ENCODE measurements at regions of chr19 and their contacts with region 1.

Region 1: GRCh38 chr19:21568816-21569493 is 63.6 kb downstream of the ZNF429 start:
- DNase-seq: peak; percentile 54 to 94 (median 89)
- ATAC-seq: peak; percentile 99
- H3K4me3 ChIP-seq: peak overlapping the region; percentile 64
- H3K4me3 Mint-ChIP-seq: peak overlapping the region; percentile 85 to 99 (median 94)
- H3K27ac ChIP-seq: peak overlapping the region; percentile 71
- H3K27ac Mint-ChIP-seq: peak overlapping the region; percentile 94 to 99 (median 96)
- H3K4me1 ChIP-seq: no peaks in the 10 kb centered on the region
- H3K4me1 Mint-ChIP-seq: peaks cover 0 to 44% (median 24%) of the 10 kb centered on the region in 7 donors
- H3K27me3 ChIP-seq: no peaks in the 10 kb centered on the region
- H3K27me3 Mint-ChIP-seq: no peaks in the 10 kb centered on the region

Region 2: DNA sequence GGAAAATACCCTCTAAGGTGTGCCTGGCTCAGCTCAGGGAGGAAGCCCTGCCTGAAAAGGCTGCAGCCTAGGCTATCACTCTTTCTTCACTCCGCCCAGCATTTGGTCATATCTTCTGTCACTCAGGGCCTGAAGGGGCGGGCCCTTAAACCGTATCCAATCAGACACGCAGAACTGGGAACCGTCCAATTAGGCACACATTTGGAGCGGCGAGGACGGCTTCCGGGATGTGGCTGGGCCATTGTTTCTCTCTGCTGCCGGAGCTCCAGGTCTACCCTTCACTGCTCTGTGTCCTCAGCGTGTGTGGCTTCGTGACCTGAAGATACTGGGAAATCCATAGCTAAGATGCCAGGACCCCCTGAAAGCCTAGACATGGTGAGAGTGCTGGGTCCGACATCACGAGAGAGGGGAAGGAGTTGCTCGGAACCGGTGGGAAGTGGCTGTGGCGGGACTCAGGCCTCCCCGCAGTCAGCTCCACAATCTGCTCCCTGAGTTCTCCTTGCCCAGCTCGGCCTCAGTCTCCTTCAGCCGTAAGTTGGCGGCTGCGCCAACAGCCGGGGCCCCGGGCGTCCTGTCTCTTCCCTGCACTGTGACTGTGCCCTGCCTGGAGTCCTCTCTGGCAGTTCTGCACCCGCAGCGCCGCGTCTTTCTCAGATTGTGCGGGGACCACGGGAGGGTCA is 171.9 kb before region 1 on chr19 and contains the start of gene ZNF493:
- CTCF ChIA-PET with region 1: no interaction called
- POLR2A ChIA-PET with region 1: interaction called, 5 read pairs
- intact Hi-C with region 1: loop called in 1 of 2 experiments (anchors 2 kb)
- DNase-seq: peak; percentile 76 to 95 (median 91)
- ATAC-seq: peak; percentile 100
- H3K4me3 ChIP-seq: peak within 1 kb of the TSS; percentile 80
- H3K4me3 Mint-ChIP-seq: peak within 1 kb of the TSS; percentile 90 to 99 (median 97)
- H3K27ac ChIP-seq: peak within 1 kb of the TSS; percentile 77
- H3K27ac Mint-ChIP-seq: peak within 1 kb of the TSS; percentile 68 to 97 (median 92)
- H3K4me1 ChIP-seq: peaks cover 6 to 11% of the 10 kb centered on the region in 2 donors
- H3K4me1 Mint-ChIP-seq: peaks cover 19 to 48% (median 32%) of the 10 kb centered on the region in 7 donors
- H3K27me3 ChIP-seq: no peaks in the 10 kb centered on the region
- H3K27me3 Mint-ChIP-seq: peaks cover 0 to 4% (median 0%) of the 10 kb centered on the region in 5 donors
- total RNA-seq, gene ZNF493: 19.7 to 78.3 (median 34.6) TPM

Region 3: GRCh38 chr19:21423057-21424041 is 145.6 kb before region 1 on chr19:
- CTCF ChIA-PET with region 1: no interaction called
- POLR2A ChIA-PET with region 1: no interaction called
- intact Hi-C with region 1: no loop called
- DNase-seq: no peak
- ATAC-seq: no peak
- H3K4me3 ChIP-seq: no peak overlapping the region
- H3K4me3 Mint-ChIP-seq: no peak overlapping the region
- H3K27ac ChIP-seq: no peak overlapping the region
- H3K27ac Mint-ChIP-seq: no peak overlapping the region
- H3K4me1 ChIP-seq: no peaks in the 10 kb centered on the region
- H3K4me1 Mint-ChIP-seq: no peaks in the 10 kb centered on the region
- H3K27me3 ChIP-seq: no peaks in the 10 kb centered on the region
- H3K27me3 Mint-ChIP-seq: no peaks in the 10 kb centered on the region

Region 4: GRCh38 chr19:21586311-21587116 is 17.6 kb after region 1 on chr19:
- CTCF ChIA-PET with region 1: no interaction called
- POLR2A ChIA-PET with region 1: interaction called, 144 read pairs
- intact Hi-C with region 1: loop called in 1 of 2 experiments (anchors 2 kb)
- DNase-seq: peak in 6 of 9 donors; percentile 11 to 43 (median 34)
- ATAC-seq: peak; percentile 69
- H3K4me3 ChIP-seq: peak overlapping the region; percentile 39
- H3K4me3 Mint-ChIP-seq: peak overlapping the region; percentile 47 to 91 (median 82)
- H3K27ac ChIP-seq: peak overlapping the region; percentile 48
- H3K27ac Mint-ChIP-seq: peak overlapping the region in 5 of 9 donors; percentile 73 to 88 (median 80)
- H3K4me1 ChIP-seq: peaks cover 0 to 12% of the 10 kb centered on the region in 2 donors
- H3K4me1 Mint-ChIP-seq: peaks cover 0 to 50% (median 19%) of the 10 kb centered on the region in 7 donors
- H3K27me3 ChIP-seq: no peaks in the 10 kb centered on the region
- H3K27me3 Mint-ChIP-seq: peaks cover 0 to 27% (median 7%) of the 10 kb centered on the region in 5 donors

Region 5: DNA sequence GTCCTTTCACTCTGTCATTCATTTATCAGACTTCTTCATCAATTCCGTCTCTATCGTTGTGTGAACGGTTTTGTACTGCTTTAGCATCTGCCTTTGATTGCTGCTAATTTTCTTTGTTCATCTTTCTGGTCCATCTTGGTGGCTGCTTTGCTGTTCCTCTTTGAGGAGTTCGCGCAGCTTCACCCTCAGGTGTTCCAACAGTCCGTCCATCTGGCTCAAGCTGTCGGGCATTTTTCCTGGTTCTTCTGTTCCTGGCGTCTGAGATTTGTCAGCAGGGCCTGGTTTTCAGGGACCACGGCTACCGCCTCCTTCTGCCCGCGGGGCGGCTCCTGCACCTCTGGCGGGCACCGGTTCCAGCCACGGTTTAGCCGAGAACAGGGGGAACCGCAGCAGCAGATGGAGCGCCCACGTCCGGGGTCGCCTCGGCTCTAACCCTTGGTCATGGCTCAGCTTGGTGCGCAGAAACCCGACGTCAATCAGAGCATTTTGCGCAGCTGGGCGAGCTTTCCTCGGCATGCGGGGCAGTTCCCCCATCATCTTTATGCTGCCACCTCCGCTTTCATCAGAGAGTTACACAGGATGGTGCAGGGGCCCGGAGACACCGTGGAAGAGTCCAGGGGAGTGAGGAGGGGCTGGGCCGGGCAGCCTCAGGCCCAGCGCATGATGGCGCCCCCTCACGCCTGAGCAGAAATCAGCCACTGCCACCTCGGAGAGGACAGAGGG is 108.9 kb after region 1 on chr19:
- CTCF ChIA-PET with region 1: no interaction called
- POLR2A ChIA-PET with region 1: no interaction called
- intact Hi-C with region 1: loop called in 1 of 2 experiments (anchors 5 kb)
- DNase-seq: peak in 2 of 9 donors; percentile 4 to 8
- ATAC-seq: peak; percentile 57
- H3K4me3 ChIP-seq: peak overlapping the region; percentile 20
- H3K4me3 Mint-ChIP-seq: peak overlapping the region in 8 of 10 donors; percentile 6 to 76 (median 63)
- H3K27ac ChIP-seq: no peak overlapping the region
- H3K27ac Mint-ChIP-seq: peak overlapping the region in 4 of 9 donors; percentile 16 to 70 (median 36)
- H3K4me1 ChIP-seq: no peaks in the 10 kb centered on the region
- H3K4me1 Mint-ChIP-seq: peaks cover 0 to 22% (median 0%) of the 10 kb centered on the region in 7 donors
- H3K27me3 ChIP-seq: no peaks in the 10 kb centered on the region
- H3K27me3 Mint-ChIP-seq: peaks cover 0 to 7% (median 3%) of the 10 kb centered on the region in 5 donors

Region 6: GRCh38 chr19:21767065-21767800 is 198.3 kb after region 1 on chr19 and contains the start of gene ZNF100:
- CTCF ChIA-PET with region 1: no interaction called
- POLR2A ChIA-PET with region 1: interaction called, 3 read pairs
- intact Hi-C with region 1: loop called in 1 of 2 experiments (anchors 1 kb)
- DNase-seq: peak; percentile 64 to 88 (median 80)
- ATAC-seq: peak; percentile 98
- H3K4me3 ChIP-seq: peak within 1 kb of the TSS; percentile 97
- H3K4me3 Mint-ChIP-seq: peak within 1 kb of the TSS; percentile 92 to 98 (median 97)
- H3K27ac ChIP-seq: peak within 1 kb of the TSS; percentile 81
- H3K27ac Mint-ChIP-seq: peak within 1 kb of the TSS; percentile 89 to 98 (median 92)
- H3K4me1 ChIP-seq: no peaks in the 10 kb centered on the region
- H3K4me1 Mint-ChIP-seq: peaks cover 7 to 43% (median 27%) of the 10 kb centered on the region in 7 donors
- H3K27me3 ChIP-seq: no peaks in the 10 kb centered on the region
- H3K27me3 Mint-ChIP-seq: no peaks in the 10 kb centered on the region
- total RNA-seq, gene ZNF100: 9.5 to 22.5 (median 18.4) TPM